Activated CD4-positive, alpha-beta memory T cell treated with anti-CD3 and anti-CD28 coated beads, Interleukin-2, amount 10 ng/mL, durations not matched to agents 7 days and 5 days (primary cell): ENCODE measurements at regions of chr10 and their contacts with region 1.

Region 1: GRCh38 chr10:102461187-102462054 is 10.1 kb upstream of the C10orf95 start:
- DNase-seq: peak; percentile 93
- H3K4me3 Mint-ChIP-seq: peak overlapping the region; percentile 84
- H3K27ac Mint-ChIP-seq: peak overlapping the region; percentile 60
- H3K4me1 Mint-ChIP-seq: peaks cover 31% of the 10 kb centered on the region
- H3K27me3 Mint-ChIP-seq: no peaks in the 10 kb centered on the region

Region 2: GRCh38 chr10:102450194-102450938 is 11.1 kb before region 1 on chr10:
- CTCF ChIA-PET with region 1: interaction called, 22 read pairs
- POLR2A ChIA-PET with region 1: interaction called, 73 read pairs
- DNase-seq: peak; percentile 92
- H3K4me3 Mint-ChIP-seq: peak overlapping the region; percentile 95
- H3K27ac Mint-ChIP-seq: peak overlapping the region; percentile 92
- H3K4me1 Mint-ChIP-seq: peaks cover 43% of the 10 kb centered on the region
- H3K27me3 Mint-ChIP-seq: no peaks in the 10 kb centered on the region

Region 3: DNA sequence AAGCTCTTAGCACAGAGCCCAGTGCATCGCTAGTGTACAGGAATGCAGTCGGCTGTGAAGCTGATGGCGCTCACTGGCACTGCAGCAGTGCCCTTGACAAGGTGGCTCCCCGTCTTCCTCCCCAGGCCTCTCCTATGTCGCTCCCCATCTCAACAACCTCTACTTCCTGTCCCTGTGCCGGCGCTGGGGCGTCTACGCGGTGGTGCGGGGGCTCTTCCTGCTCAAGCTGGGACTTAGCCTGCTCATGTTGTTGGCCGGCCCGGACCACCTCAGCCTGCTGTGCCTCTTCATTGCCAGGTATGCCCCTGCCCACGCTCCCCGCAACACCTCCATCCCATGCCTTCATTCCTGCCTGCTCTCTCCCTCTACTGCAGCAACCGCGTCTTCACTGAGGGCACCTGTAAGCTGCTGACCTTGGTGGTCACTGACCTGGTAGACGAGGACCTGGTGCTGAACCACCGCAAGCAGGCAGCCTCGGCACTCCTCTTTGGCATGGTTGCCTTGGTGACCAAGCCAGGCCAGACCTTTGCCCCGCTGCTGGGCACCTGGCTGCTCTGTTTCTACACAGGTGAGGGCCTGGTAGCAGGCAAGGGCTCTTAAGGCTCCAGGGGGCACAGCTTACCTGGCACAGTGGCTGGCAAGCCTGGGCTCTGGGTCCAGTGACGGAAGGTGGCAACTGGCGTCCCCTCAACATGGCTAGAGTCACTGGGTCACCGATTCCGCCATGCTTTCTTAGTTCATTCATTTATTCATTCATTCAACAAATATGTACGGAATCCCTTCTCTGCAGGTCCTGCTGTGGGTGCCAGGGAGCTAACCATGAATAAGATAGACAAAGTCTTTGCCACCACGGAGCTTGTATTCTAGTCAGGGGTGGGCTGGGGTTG is 12.3 kb after region 1 on chr10:
- CTCF ChIA-PET with region 1: interaction called, 12 read pairs
- POLR2A ChIA-PET with region 1: interaction called, 11 read pairs
- DNase-seq: peak; percentile 26
- H3K4me3 Mint-ChIP-seq: no peak overlapping the region
- H3K27ac Mint-ChIP-seq: peak overlapping the region; percentile 56
- H3K4me1 Mint-ChIP-seq: peaks cover 16% of the 10 kb centered on the region
- H3K27me3 Mint-ChIP-seq: no peaks in the 10 kb centered on the region

Region 4: GRCh38 chr10:102480396-102480795 is 19.0 kb after region 1 on chr10:
- CTCF ChIA-PET with region 1: interaction called, 12 read pairs
- POLR2A ChIA-PET with region 1: interaction called, 3 read pairs
- DNase-seq: no peak
- H3K4me3 Mint-ChIP-seq: no peak overlapping the region
- H3K27ac Mint-ChIP-seq: no peak overlapping the region
- H3K4me1 Mint-ChIP-seq: peaks cover 4% of the 10 kb centered on the region
- H3K27me3 Mint-ChIP-seq: no peaks in the 10 kb centered on the region

Region 5: DNA sequence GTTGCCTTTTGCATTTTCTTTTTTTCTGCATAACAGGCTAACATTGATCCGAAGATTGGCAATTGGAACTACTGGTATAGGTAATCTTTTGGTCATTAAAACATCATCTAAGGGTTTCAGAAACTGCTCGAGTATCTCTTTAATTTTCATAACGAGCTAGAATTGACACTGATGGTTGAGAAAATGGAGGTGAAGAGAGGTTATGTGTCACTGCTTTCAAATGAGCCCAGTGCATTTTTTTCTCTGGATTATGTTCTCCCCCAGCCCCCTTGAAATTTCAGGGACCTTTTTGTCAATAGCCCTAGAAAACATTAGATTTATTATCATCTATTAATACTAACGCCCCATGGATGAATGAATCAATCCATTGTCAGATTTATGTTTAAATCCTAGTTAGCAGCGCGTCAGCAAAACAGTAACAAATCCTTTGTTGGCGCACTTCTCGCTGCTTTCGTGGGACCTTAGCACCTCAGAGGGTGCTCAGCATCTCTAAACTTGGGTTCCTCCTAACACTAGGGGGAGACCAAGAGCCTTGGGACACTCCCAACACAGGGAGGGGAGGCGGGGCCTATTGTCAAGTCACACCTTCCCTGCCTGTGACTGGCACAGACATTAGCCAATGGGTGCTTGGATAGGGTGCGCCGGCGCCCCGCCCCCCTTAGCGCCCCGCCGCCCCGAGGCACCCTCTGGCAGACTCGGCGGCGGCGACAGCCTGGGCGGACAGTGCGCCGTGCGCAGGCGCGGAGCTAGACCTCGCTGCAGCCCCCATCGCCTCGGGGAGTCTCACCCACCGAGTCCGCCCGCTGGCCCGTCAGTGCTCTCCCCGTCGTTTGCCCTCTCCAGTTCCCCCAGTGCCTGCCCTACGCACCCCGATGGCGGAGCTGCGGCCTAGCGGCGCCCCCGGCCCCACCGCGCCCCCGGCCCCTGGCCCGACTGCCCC is 42.1 kb after region 1 on chr10 and contains the start of gene SUFU:
- CTCF ChIA-PET with region 1: interaction called, 10 read pairs
- POLR2A ChIA-PET with region 1: no interaction called
- DNase-seq: peak; percentile 99
- H3K4me3 Mint-ChIP-seq: no peak within 1 kb of the TSS
- H3K27ac Mint-ChIP-seq: peak within 1 kb of the TSS; percentile 73
- H3K4me1 Mint-ChIP-seq: peaks cover 41% of the 10 kb centered on the region
- H3K27me3 Mint-ChIP-seq: no peaks in the 10 kb centered on the region
- total RNA-seq, gene SUFU: 18.0 to 19.6 TPM